ENCODE measurements at regions of chr18 and their contacts with region 1.

Region 1: GRCh38 chr18:52118684-52119083 is 221.3 kb upstream of the DCC start:
- DNase-seq: no peak
- ATAC-seq: no peak
- H3K4me3 ChIP-seq: no peak overlapping the region
- H3K27ac ChIP-seq: no peak overlapping the region
- H3K4me1 ChIP-seq: no peaks in the 10 kb centered on the region
- H3K27me3 ChIP-seq: no peaks in the 10 kb centered on the region
- CTCF ChIP-seq: no peak

Region 2: DNA sequence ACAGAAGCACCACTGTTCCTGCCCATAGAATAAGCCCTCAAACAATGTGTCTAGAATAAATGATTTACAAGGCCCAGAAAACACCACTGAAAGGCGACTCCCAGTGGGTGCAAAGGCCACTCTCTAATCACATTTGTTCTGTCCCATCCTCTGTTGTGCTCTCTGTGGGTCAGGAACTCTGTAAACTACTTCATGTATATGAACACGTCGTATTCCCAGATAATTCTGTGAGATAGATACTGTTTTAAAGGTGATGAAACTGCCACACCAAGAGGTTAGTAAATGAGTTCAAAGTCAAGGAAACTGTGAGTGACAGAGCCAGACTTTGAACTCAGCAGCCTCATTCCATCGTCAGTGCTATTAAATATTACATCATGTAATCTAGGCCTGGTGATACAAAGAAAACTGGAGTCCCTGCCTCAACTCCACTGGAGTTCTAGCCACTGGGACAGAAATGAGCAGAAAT is 48.4 kb before region 1 on chr18:
- CTCF ChIA-PET with region 1: no interaction called
- POLR2A ChIA-PET with region 1: no interaction called
- intact Hi-C with region 1: loop called (anchors 2 kb)
- DNase-seq: no peak
- ATAC-seq: no peak
- H3K4me3 ChIP-seq: no peak overlapping the region
- H3K27ac ChIP-seq: no peak overlapping the region
- H3K4me1 ChIP-seq: no peaks in the 10 kb centered on the region
- H3K27me3 ChIP-seq: no peaks in the 10 kb centered on the region
- CTCF ChIP-seq: no peak